MCF 10A (cell line): ENCODE measurements at regions of chr19 and their contacts with region 1.

Region 1: DNA sequence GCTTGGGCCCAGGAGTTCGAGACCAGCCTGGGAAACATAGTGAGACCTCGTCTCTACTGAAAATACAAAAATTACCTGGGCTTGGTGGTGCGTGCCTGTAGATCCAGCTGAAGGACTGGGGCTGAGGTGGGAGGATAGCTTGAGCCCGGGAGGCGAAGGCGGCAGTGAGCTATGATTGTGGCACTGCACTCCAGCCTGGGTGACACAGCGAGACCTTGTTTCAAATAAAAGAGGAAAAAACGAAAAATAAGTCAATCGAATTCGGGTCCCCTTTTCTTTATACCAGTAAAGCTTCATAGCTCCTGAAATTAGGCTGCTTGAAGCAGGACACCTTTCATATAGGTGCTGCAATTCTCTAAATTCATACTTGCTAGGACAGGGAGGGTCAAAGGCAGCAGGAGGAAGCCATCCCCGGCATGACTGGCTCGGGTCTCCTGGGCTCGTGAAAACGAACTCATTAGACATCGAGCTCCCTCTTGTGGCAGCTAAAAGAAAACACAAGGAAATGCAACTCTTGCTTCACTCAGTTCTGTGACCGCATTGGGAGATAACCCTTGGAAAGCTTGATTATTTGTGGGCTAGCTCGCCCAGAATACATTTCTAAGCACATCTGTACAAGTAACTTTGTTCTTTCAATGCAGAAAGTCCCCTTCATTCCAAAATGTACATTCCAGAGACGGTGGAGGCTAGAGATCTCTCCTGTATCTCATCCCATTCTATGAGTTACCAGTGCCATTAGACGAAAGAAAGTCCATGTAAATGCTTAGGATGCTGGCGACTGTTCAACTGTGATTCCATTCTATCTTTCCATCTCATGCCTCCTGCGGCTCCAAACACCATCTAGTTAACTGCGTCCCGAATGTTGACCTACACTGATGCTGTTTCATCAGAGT is 16.8 kb downstream of the FPR2 start:
- DNase-seq: peak; percentile 91
- H3K4me3 Mint-ChIP-seq: no peak overlapping the region
- H3K27ac Mint-ChIP-seq: no peak overlapping the region
- H3K4me1 Mint-ChIP-seq: peaks cover 6% of the 10 kb centered on the region
- H3K27me3 Mint-ChIP-seq: peaks cover 15% of the 10 kb centered on the region
- CTCF ChIP-seq: peak; percentile 80

Region 2: DNA sequence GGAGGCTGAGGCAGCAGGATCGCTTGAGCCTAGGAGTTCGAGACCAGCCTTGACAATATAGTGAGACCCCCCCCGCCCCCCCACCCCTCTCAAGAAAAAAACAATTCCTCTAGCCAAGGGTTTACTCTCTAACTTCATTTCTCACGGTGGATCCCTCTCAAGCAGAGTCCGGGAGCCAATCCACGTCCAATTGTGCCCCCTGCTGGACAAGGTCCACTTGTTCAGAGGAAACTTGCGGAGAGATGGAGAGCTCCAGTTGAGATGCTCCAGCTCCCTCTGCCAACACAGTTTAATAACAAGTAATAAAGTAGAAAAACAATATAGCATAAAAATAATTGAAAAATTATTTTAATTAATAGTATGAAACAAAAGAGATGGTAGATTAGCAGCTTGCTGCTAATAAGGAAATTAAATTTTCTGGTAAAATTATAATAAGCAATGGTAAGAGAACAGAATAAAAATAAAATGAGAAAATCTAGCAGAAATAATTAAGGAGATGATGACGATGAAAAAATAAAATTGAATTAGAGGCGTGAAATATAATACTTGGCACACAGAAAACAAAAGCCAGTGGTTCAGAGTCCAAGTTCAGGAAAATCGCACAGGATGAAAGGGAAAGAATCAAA is 116.7 kb before region 1 on chr19:
- CTCF ChIA-PET with region 1: interaction called, 21 read pairs
- POLR2A ChIA-PET with region 1: interaction called, 3 read pairs
- intact Hi-C with region 1: loop called (anchors 2 kb)
- DNase-seq: peak; percentile 90
- H3K4me3 Mint-ChIP-seq: no peak overlapping the region
- H3K27ac Mint-ChIP-seq: no peak overlapping the region
- H3K4me1 Mint-ChIP-seq: peaks cover 7% of the 10 kb centered on the region
- H3K27me3 Mint-ChIP-seq: peaks cover 30% of the 10 kb centered on the region
- CTCF ChIP-seq: peak; percentile 66

Region 3: DNA sequence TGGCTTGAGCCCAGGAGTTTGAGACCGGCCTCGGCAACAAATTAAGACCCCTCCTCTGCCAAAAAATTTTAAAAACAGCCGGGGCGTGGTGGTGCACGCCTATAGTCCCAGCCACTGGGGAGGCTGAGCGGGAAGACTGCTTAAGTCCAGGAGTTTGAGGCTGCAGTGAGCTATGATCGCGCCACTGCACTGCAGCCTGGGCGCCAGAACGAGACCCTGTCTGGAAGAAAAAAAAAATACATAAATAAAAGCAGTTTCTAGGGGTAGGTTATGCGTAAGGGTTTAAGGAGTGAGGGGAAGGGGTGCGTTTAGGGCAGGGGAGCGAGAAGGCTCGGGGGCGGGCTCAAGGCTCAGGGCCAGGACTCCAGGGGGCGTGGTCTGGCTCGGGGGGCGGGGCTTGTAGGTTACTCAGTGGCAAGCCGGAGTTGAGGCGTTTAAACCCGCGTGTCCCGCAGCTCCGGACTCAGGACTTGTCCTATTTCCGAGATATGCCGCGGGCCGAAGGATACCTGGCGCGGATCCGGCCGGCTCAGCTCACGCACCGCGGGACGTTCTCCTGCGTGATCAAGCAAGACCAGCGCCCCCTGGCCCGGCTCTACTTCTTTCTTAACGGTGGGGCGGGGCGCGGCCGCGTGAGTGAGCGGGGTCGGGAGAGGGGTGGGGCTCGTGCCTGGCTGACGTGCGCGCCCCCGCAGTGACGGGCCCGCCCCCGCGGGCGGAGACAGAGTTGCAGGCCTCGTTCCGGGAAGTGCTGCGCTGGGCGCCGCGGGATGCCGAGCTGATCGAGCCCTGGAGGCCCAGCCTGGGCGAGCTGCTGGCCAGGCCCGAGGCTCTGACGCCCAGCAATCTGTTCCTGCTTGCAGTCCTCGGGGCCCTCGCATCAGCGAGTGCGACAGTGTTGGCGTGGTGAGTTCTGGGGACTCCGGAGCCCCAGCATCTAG is 74.0 kb before region 1 on chr19:
- CTCF ChIA-PET with region 1: interaction called, 138 read pairs
- POLR2A ChIA-PET with region 1: interaction called, 7 read pairs
- intact Hi-C with region 1: no loop called
- DNase-seq: peak; percentile 95
- H3K4me3 Mint-ChIP-seq: peak overlapping the region; percentile 83
- H3K27ac Mint-ChIP-seq: peak overlapping the region; percentile 90
- H3K4me1 Mint-ChIP-seq: peaks cover 59% of the 10 kb centered on the region
- H3K27me3 Mint-ChIP-seq: no peaks in the 10 kb centered on the region
- CTCF ChIP-seq: no peak

Region 4: DNA sequence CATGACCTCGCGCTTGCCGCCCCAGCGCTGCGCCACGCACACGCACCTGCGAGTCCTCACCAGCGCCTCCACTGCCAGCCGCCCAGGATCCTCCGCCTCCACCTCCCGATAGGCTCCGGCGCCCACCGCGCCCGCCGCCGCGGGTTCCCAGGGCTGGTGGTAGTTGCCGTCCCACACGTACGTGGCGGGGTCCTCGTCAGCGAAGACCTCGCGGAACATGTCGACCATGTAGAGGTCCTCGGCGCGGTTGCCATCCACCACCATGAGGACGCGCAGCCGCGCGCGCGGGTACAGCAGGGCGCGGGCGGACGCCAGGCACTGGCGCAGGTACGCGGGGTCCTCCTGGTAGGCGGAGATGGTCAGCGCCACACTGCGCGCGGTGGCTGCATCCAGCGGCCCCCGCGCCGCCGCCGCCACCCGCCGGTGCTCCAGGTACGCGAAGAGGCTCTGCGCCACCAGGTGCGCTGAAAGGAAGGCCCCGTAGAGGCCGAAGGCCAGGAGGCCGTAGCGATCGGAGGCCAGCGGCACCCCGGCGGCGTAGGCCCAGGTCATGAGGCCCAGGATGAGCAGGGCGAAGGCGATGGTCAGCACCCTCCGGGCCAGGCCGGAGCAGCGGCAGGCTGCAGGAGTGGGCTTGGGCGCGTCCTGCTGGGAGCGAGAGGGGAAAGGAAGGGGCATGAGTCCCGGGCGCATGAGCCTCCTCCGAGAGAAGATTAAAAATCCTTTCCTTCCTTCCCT is 58.4 kb before region 1 on chr19:
- CTCF ChIA-PET with region 1: interaction called, 138 read pairs
- POLR2A ChIA-PET with region 1: interaction called, 3 read pairs
- intact Hi-C with region 1: no loop called
- DNase-seq: no peak
- H3K4me3 Mint-ChIP-seq: no peak overlapping the region
- H3K27ac Mint-ChIP-seq: no peak overlapping the region
- H3K4me1 Mint-ChIP-seq: peaks cover 25% of the 10 kb centered on the region
- H3K27me3 Mint-ChIP-seq: no peaks in the 10 kb centered on the region
- CTCF ChIP-seq: no peak

Region 5: DNA sequence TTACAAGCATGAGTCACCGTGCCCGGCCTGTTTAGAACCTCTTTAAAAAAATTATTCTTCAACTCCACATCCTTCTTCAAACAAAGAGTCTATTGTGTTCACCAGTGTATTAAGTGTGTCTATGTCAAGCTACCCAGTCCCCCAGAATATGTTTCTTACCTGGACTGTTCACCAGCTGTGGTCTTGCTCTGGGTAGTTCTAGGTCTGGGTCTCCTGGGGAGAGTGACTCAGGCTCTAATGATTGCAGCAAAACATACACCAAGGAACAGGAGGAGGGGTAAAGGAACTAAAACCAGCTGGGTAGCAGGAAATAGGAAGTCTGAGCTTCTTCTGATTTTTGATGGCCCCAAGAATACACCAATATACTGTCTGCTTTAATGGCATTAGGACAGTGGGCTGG is 26.2 kb before region 1 on chr19 and contains the start of gene FPR1:
- CTCF ChIA-PET with region 1: interaction called, 17 read pairs
- POLR2A ChIA-PET with region 1: no interaction called
- intact Hi-C with region 1: no loop called
- DNase-seq: peak; percentile 63
- H3K4me3 Mint-ChIP-seq: peak within 1 kb of the TSS; percentile 84
- H3K27ac Mint-ChIP-seq: peak within 1 kb of the TSS; percentile 96
- H3K4me1 Mint-ChIP-seq: peaks cover 26% of the 10 kb centered on the region
- H3K27me3 Mint-ChIP-seq: no peaks in the 10 kb centered on the region
- CTCF ChIP-seq: no peak
- total RNA-seq, gene FPR1: 6.2 and 8.6 TPM in 2 replicates

Region 6: DNA sequence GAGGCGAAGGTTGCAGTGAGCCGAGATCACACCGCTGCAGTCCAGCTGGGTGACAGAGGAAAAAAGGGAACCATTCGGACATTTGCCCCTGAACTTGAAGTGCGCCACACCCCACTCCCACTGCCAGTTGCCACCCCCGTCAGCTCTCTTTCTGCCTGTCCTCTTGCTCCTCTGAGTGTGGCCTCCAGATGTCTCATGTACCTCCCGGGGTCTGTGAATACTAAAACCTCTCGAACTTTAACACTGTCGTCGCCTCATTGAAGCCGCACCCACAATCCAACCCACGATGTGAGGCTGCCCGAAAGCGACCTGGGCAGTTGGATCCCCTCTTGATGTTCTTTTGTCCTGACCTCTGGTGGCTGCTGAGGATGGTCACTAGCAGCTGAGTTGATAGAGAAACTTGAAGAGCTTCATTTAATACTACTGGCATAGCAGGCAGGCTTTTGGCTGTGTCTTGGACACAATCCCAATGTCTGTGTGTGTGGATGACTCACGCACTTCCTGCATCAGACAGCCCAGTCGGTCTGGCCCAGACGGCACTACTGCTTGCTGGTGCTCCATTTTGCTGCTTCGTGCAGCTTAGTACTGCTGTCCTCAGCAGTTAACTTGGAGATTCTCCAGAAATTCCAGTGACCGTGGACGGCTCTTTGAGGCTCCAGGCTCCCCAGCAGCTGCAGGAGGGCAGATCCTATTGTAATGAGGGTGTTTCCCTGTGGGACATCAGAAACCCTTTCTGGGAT is 21.4 kb after region 1 on chr19:
- CTCF ChIA-PET with region 1: interaction called, 18 read pairs
- POLR2A ChIA-PET with region 1: interaction called, 4 read pairs
- intact Hi-C with region 1: no loop called
- DNase-seq: peak; percentile 93
- H3K4me3 Mint-ChIP-seq: peak overlapping the region; percentile 2
- H3K27ac Mint-ChIP-seq: peak overlapping the region; percentile 43
- H3K4me1 Mint-ChIP-seq: peaks cover 16% of the 10 kb centered on the region
- H3K27me3 Mint-ChIP-seq: no peaks in the 10 kb centered on the region
- CTCF ChIP-seq: no peak